Cardiac septum (tissue), 1 donor: ENCODE measurements at regions of chr2 and their contacts with region 1.

Region 1: DNA sequence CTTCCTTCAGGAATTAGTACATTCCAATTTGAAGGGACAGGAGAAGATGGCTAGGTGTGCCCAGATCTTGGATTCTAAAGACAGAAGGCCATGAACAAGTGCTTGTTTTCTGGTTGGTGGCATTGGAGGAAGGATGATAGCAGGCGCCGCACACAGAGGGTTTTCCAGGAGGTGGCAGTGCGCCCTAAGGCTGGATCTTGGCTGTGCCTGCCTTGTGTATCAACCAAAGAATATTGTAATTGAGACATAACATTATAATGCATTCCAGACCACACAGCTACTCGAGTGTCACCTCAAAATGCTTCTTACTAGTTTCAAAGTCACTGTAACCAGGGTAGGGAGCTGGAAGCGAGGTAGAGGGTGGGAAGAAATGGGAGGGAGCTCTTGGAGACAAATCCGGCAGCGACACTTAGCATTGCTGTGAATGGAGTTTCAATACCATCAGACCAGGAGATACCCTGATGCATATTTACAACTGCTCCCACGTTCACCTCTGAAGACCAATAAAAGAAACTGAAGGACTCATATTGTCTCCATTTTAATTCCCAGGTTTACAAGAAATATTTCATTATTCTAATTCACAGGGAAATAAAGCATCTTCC is 42.5 kb downstream of the CPO start:
- DNase-seq: peak; percentile 85

Region 2: GRCh38 chr2:206800506-206801417 is 181.1 kb before region 1 on chr2:
- intact Hi-C with region 1: loop called (anchors 5 kb)
- DNase-seq: no peak